ENCODE measurements at regions of chr3 and their contacts with region 1.

Region 1: GRCh38 chr3:113626503-113627371 is 69.7 kb downstream of the USF3 start:
- DNase-seq: peak; percentile 55
- H3K4me3 ChIP-seq: no peak overlapping the region
- H3K27ac ChIP-seq: no peak overlapping the region
- H3K4me1 ChIP-seq: no peaks in the 10 kb centered on the region
- H3K27me3 ChIP-seq: no peaks in the 10 kb centered on the region
- CTCF ChIP-seq: peak; percentile 94 to 99

Region 2: DNA sequence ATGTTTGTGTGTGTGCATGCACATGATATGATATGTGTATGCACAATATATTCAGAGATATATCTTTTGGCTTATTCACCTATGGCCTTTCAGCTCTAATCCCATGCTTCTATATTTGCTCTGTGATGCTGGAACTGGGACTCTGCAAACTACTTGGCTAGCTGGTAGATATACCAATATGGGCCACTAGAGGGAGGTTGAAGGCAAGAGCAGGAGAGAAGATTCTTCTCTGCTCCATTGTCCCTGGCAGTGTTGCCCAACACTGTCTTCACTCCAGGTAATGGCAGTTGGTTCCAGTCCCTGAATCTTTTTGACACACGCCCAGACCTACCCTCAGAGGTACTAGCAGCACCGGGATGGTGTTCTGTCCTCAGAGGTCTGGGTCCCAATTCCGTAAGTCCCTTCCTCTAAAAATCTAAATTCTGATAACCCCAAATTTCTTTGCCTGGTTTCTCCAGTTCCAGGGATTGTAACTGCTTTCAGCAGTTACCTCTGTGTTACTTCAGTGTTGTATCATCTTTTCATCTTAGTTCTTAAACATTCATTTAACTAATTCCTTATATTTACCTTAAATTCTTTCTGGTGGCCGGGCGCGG is 591.3 kb before region 1 on chr3:
- CTCF ChIA-PET with region 1: no interaction called
- dilution Hi-C with region 1: no loop called
- in situ Hi-C with region 1: no loop called
- intact Hi-C with region 1: loop called (anchors 5 kb)
- DNase-seq: peak; percentile 54
- H3K4me3 ChIP-seq: no peak overlapping the region
- H3K27ac ChIP-seq: no peak overlapping the region
- H3K4me1 ChIP-seq: no peaks in the 10 kb centered on the region
- H3K27me3 ChIP-seq: no peaks in the 10 kb centered on the region
- CTCF ChIP-seq: peak; percentile 91 to 95

Region 3: GRCh38 chr3:113117511-113118234 is 509.1 kb before region 1 on chr3:
- CTCF ChIA-PET with region 1: no interaction called
- dilution Hi-C with region 1: no loop called
- in situ Hi-C with region 1: no loop called
- intact Hi-C with region 1: no loop called
- DNase-seq: no peak
- H3K4me3 ChIP-seq: no peak overlapping the region
- H3K27ac ChIP-seq: no peak overlapping the region
- H3K4me1 ChIP-seq: peaks cover 6% of the 10 kb centered on the region
- H3K27me3 ChIP-seq: no peaks in the 10 kb centered on the region
- CTCF ChIP-seq: no peak

Region 4: GRCh38 chr3:113495035-113495434 is 131.7 kb before region 1 on chr3:
- CTCF ChIA-PET with region 1: no interaction called
- dilution Hi-C with region 1: no loop called
- in situ Hi-C with region 1: no loop called
- intact Hi-C with region 1: loop called (anchors 1 kb)
- DNase-seq: peak; percentile 27
- H3K4me3 ChIP-seq: no peak overlapping the region
- H3K27ac ChIP-seq: no peak overlapping the region
- H3K4me1 ChIP-seq: no peaks in the 10 kb centered on the region
- H3K27me3 ChIP-seq: no peaks in the 10 kb centered on the region
- CTCF ChIP-seq: peak; percentile 37 to 56

Region 5: GRCh38 chr3:113505867-113506266 is 120.9 kb before region 1 on chr3:
- CTCF ChIA-PET with region 1: no interaction called
- dilution Hi-C with region 1: no loop called
- in situ Hi-C with region 1: no loop called
- intact Hi-C with region 1: no loop called
- DNase-seq: no peak
- H3K4me3 ChIP-seq: no peak overlapping the region
- H3K27ac ChIP-seq: no peak overlapping the region
- H3K4me1 ChIP-seq: no peaks in the 10 kb centered on the region
- H3K27me3 ChIP-seq: no peaks in the 10 kb centered on the region
- CTCF ChIP-seq: no peak

Region 6: GRCh38 chr3:113594066-113594465 is 32.7 kb before region 1 on chr3:
- CTCF ChIA-PET with region 1: no interaction called
- dilution Hi-C with region 1: no loop called
- in situ Hi-C with region 1: no loop called
- intact Hi-C with region 1: no loop called
- DNase-seq: no peak
- H3K4me3 ChIP-seq: no peak overlapping the region
- H3K27ac ChIP-seq: no peak overlapping the region
- H3K4me1 ChIP-seq: no peaks in the 10 kb centered on the region
- H3K27me3 ChIP-seq: no peaks in the 10 kb centered on the region
- CTCF ChIP-seq: no peak

Region 7: DNA sequence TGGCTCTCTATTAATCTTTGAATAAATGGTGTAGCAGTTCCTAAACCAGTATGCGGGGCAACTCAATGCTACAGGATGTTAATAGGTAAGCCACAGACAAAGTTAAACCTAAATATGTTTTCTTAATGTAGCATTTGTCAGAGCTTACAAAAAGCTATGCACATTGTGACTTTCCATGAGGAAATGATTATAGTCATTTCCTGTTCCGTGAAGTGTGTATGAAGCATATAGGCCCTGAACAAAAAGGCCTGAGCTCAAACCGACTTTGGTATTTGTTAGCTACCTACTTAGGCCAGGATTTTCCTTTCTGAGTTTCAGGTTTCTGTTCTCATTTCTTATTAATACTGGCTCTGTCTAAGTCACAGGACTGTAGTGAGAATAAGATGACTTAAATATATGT is 596.4 kb after region 1 on chr3:
- CTCF ChIA-PET with region 1: no interaction called
- dilution Hi-C with region 1: no loop called
- in situ Hi-C with region 1: no loop called
- intact Hi-C with region 1: no loop called
- DNase-seq: no peak
- H3K4me3 ChIP-seq: no peak overlapping the region
- H3K27ac ChIP-seq: no peak overlapping the region
- H3K4me1 ChIP-seq: no peaks in the 10 kb centered on the region
- H3K27me3 ChIP-seq: no peaks in the 10 kb centered on the region
- CTCF ChIP-seq: no peak